ENCODE measurements at regions of chr11 and their contacts with region 1.

Region 1: DNA sequence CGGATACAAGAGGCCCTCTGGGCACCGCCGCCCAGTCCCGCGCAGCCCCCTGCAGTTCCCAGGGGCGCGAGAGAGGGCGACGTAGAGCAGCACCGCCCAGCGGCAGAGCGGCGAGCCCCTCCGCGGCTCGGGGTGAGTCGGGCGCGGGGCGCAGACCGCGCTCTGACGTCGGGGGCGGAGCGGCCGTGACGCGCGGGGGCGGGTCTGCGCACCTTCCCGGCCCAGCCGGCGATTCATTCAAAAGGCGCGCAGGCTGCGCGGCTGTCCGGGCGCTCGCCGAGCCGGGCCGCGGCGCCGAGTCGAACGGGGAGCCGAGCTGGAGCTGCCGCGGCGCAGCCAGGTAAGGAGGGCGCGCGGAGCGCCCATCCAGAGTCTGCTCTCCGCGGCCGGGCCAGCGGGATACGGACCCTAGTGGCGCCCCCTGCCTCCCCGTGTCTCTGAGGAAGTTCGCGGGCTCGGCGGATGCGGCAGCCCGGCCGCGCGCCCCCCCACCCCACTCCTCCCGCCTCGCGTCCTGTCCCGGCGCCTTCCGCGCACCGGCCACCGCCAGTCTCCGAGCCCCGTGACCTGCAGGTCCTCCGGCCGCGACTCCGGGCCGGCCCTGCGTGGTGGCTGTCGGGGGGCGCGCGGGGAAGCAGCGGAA is at the start of gene RELT:
- DNase-seq: peak; percentile 89 to 91
- ATAC-seq: peak; percentile 83 to 84
- H3K4me3 ChIP-seq: peak within 1 kb of the TSS; percentile 59
- H3K27ac ChIP-seq: peak within 1 kb of the TSS; percentile 75 to 93
- H3K4me1 ChIP-seq: peaks cover 23% of the 10 kb centered on the region
- CTCF ChIP-seq: peak; percentile 73
- EP300 ChIP-seq: no peak
- POLR2A ChIP-seq: peak; percentile 98
- RAD21 ChIP-seq: peak; percentile 38 to 44; a peak in 3 of 5 replicates
- polyA plus RNA-seq, gene RELT: 2.9 TPM in 2 replicates

Region 2: GRCh38 chr11:73218106-73218829 is 158.0 kb before region 1 on chr11 and contains the start of gene P2RY2:
- CTCF ChIA-PET with region 1: no interaction called
- POLR2A ChIA-PET with region 1: no interaction called
- DNase-seq: peak; percentile 72 to 82
- ATAC-seq: peak; percentile 90 to 94
- H3K4me3 ChIP-seq: peak within 1 kb of the TSS; percentile 43
- H3K27ac ChIP-seq: peak within 1 kb of the TSS; percentile 68 to 91
- H3K4me1 ChIP-seq: peaks cover 16% of the 10 kb centered on the region
- CTCF ChIP-seq: peak; percentile 74
- EP300 ChIP-seq: no peak
- POLR2A ChIP-seq: peak; percentile 79
- RAD21 ChIP-seq: peak in 1 of 2 experiments; percentile 31; a peak in 3 of 5 replicates
- polyA plus RNA-seq, gene P2RY2: 3.7 and 5.2 TPM in 2 replicates

Region 3: GRCh38 chr11:73295231-73295995 is 80.9 kb before region 1 on chr11:
- CTCF ChIA-PET with region 1: interaction called, 11 read pairs
- POLR2A ChIA-PET with region 1: no interaction called
- DNase-seq: peak; percentile 70 to 73
- ATAC-seq: peak; percentile 65 to 84
- H3K4me3 ChIP-seq: no peak overlapping the region
- H3K27ac ChIP-seq: peak overlapping the region in 1 of 2 experiments; percentile 47; a peak in 1 of 6 replicates
- H3K4me1 ChIP-seq: peaks cover 8% of the 10 kb centered on the region
- CTCF ChIP-seq: peak; percentile 86
- EP300 ChIP-seq: no peak
- POLR2A ChIP-seq: no peak
- RAD21 ChIP-seq: peak in 1 of 2 experiments; percentile 60; a peak in 4 of 5 replicates

Region 4: GRCh38 chr11:73335204-73335923 is 40.9 kb before region 1 on chr11:
- CTCF ChIA-PET with region 1: interaction called, 22 read pairs
- POLR2A ChIA-PET with region 1: no interaction called
- DNase-seq: peak; percentile 73 to 93
- ATAC-seq: peak; percentile 72 to 83
- H3K4me3 ChIP-seq: no peak overlapping the region
- H3K27ac ChIP-seq: peak overlapping the region; percentile 62 to 80
- H3K4me1 ChIP-seq: peaks cover 38% of the 10 kb centered on the region
- CTCF ChIP-seq: peak; percentile 97
- EP300 ChIP-seq: no peak
- POLR2A ChIP-seq: no peak
- RAD21 ChIP-seq: peak; percentile 93 to 95

Region 5: DNA sequence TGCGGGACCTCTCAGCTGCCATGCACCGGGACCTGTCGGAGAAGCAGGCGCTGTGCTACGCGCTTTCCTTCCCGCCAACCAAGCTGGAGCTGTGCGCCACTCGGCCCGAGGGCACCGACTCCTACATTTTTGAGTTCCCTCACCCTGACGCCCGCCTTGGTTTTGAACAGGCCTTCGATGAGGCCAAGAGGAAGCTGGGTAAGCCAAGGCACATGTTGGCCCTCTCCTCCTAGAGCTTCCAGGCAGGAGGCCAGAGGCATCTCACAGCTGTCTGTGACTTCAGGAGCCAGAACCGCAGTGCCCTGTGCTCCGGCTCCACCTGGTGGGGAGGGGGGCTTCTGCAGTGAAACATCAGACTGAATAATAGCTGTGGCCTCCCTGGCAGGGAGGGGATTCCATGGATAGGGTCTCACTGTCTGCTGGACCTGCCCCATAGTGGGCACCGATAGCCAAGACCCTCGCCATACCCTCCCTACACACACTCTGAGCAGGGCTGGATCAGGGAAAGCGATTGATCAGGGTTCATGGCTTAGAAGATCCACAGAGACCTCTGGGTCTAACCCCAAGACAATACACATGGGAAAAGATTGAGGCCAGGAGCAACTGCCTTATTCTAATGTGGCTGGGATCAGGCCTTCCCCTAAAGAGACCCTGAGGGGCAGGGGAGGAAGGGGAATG is 15.8 kb before region 1 on chr11:
- CTCF ChIA-PET with region 1: interaction called, 667 read pairs
- POLR2A ChIA-PET with region 1: no interaction called
- DNase-seq: peak; percentile 43 to 75
- ATAC-seq: peak; percentile 72 to 86
- H3K4me3 ChIP-seq: no peak overlapping the region
- H3K27ac ChIP-seq: no peak overlapping the region
- H3K4me1 ChIP-seq: no peaks in the 10 kb centered on the region
- CTCF ChIP-seq: peak; percentile 49
- EP300 ChIP-seq: no peak
- POLR2A ChIP-seq: no peak
- RAD21 ChIP-seq: peak; percentile 42 to 63; a peak in 4 of 5 replicates

Region 6: GRCh38 chr11:73412308-73412707 is 36.0 kb after region 1 on chr11:
- CTCF ChIA-PET with region 1: no interaction called
- POLR2A ChIA-PET with region 1: no interaction called
- DNase-seq: no peak
- ATAC-seq: no peak
- H3K4me3 ChIP-seq: no peak overlapping the region
- H3K27ac ChIP-seq: no peak overlapping the region
- H3K4me1 ChIP-seq: no peaks in the 10 kb centered on the region
- CTCF ChIP-seq: no peak
- EP300 ChIP-seq: no peak
- POLR2A ChIP-seq: no peak
- RAD21 ChIP-seq: no peak

Region 7: GRCh38 chr11:73429121-73429750 is 53.0 kb after region 1 on chr11:
- CTCF ChIA-PET with region 1: no interaction called
- POLR2A ChIA-PET with region 1: no interaction called
- DNase-seq: no peak
- ATAC-seq: no peak
- H3K4me3 ChIP-seq: no peak overlapping the region
- H3K27ac ChIP-seq: no peak overlapping the region
- H3K4me1 ChIP-seq: no peaks in the 10 kb centered on the region
- CTCF ChIP-seq: no peak
- EP300 ChIP-seq: no peak
- POLR2A ChIP-seq: no peak
- RAD21 ChIP-seq: no peak

Region 8: DNA sequence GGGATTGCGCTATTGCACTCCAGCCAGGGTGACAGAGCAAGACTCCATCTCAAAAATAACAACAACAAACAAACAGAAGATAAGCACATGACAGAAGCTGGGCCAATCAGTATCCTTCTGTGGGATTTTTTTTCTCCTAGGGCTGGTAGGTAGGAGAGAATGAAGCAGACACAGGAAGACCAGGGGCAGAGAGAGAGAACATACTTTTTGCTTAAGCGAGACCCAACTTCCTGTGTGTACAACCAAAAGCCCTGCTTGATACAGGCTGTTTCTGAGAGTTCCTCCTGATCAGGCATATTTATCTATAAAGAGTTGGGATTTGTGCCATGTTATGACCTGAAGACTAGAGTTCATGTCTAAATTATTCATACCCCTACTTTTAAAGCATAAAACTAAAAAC is 257.7 kb after region 1 on chr11:
- CTCF ChIA-PET with region 1: no interaction called
- POLR2A ChIA-PET with region 1: no interaction called
- DNase-seq: no peak
- ATAC-seq: no peak
- H3K4me3 ChIP-seq: no peak overlapping the region
- H3K27ac ChIP-seq: no peak overlapping the region
- H3K4me1 ChIP-seq: no peaks in the 10 kb centered on the region
- CTCF ChIP-seq: no peak
- EP300 ChIP-seq: no peak
- POLR2A ChIP-seq: no peak
- RAD21 ChIP-seq: no peak